ENCODE measurements at regions of chr1 and their contacts with region 1.

Region 1: DNA sequence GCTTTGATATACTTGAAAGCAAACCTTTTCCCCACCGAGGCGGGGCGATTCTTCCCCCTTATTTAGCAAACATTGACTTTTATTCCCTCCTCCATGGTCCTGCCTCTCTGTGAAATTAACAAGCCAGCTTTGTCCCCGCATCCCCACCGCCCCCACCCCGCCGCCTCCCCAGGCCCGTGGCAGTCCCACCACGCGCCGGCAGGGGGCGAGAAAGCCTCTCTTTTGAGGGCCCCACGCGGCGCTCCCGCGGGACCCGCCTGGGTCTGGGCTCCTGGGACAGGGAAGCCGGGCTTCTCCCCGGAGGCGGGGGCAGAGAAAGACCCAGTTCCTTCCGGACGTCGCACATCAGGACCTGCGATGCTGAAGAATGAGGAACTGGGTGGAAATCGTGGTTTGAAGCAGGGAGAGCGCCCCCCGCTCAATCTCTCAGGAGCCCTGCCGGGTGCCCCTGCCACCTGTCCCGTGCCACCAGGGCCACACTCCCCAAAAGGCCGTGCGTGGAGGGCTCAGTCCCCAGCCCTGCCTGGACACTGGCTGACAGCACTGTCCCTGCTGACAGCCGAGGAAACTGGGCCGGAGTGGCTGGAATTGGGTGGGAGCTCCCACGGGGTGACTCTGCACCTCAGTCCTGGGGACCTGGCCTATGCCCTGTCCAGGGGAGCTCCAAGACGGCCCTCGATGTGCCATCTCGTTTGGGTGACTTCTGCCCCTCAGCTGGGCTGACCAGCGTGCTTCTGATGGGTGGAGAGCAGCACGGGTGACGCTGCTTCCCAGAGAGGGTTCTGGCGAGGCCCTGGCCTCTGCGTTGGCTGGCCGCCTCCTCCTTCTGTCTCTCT is 8.6 kb upstream of the ACTRT2 start:
- DNase-seq: peak in 5 of 6 donors; percentile 36 to 94 (median 76)
- ATAC-seq: peak; percentile 82 to 96 (median 92)
- H3K4me3 ChIP-seq: no peak overlapping the region
- H3K27ac ChIP-seq: peak overlapping the region in 3 of 4 donors; percentile 24 to 46 (median 35)
- H3K4me1 ChIP-seq: peaks cover 0 to 5% (median 0%) of the 10 kb centered on the region in 3 donors
- H3K27me3 ChIP-seq: no peaks in the 10 kb centered on the region
- CTCF ChIP-seq: peak; percentile 82 to 90 (median 90)

Region 2: GRCh38 chr1:2833454-2834145 is 179.1 kb before region 1 on chr1:
- intact Hi-C with region 1: no loop called
- DNase-seq: peak in 1 of 6 donors; percentile 41
- ATAC-seq: no peak
- H3K4me3 ChIP-seq: no peak overlapping the region
- H3K27ac ChIP-seq: no peak overlapping the region
- H3K4me1 ChIP-seq: no peaks in the 10 kb centered on the region
- H3K27me3 ChIP-seq: no peaks in the 10 kb centered on the region
- CTCF ChIP-seq: no peak

Region 3: GRCh38 chr1:3275471-3276340 is 263.0 kb after region 1 on chr1:
- intact Hi-C with region 1: no loop called
- DNase-seq: peak in 2 of 6 donors; percentile 40 to 76
- ATAC-seq: peak; percentile 15 to 37 (median 27)
- H3K4me3 ChIP-seq: no peak overlapping the region
- H3K27ac ChIP-seq: peak overlapping the region; percentile 62 to 84 (median 68)
- H3K4me1 ChIP-seq: no peaks in the 10 kb centered on the region
- H3K27me3 ChIP-seq: no peaks in the 10 kb centered on the region
- CTCF ChIP-seq: no peak

Region 4: DNA sequence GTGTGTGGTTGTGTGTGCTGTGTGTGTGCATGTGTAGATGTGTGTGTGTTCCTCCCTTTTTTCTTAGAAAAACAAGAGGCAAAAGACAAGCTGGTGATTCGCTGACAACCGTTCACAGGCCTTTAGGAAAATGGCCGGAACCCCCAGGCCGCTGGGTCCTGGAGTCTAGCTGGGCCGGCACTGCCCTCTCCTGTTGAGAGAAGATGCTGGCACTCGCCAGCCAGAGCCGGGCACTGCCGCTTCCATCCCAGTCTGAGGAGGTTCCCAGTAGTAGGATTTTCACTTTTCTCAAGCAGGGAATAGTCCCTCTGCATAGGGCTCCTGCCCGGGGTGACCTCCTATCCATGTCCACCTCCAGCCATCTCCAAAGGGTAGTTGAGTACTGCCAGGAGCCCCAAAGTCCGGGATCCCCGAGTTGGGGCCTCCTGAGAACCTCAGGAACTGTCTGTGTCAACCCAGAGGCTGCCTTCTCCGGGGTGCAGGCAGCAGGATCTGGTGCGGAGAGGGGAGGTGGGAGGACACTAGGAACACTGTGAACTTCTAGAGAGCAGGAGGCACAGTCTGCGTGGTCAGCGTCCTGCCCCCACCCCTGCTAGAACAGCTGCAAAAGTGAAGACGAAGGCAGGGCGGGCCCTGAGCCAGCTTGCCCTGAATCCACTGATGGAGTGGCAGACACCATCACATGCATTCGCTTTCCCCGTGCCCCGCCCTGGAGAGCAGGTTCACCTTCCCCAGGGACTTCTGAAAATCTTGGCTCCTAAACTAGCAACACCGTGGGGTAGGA is 397.7 kb after region 1 on chr1:
- intact Hi-C with region 1: loop called in 1 of 3 experiments (anchors 10 kb)
- DNase-seq: peak in 3 of 6 donors; percentile 30 to 53 (median 52)
- ATAC-seq: peak; percentile 49 to 86 (median 84)
- H3K4me3 ChIP-seq: no peak overlapping the region
- H3K27ac ChIP-seq: no peak overlapping the region
- H3K4me1 ChIP-seq: no peaks in the 10 kb centered on the region
- H3K27me3 ChIP-seq: no peaks in the 10 kb centered on the region
- CTCF ChIP-seq: peak; percentile 12 to 31 (median 17)